Sigmoid colon (tissue), 7 donors: ENCODE measurements at regions of chr14 and their contacts with region 1.

Region 1: DNA sequence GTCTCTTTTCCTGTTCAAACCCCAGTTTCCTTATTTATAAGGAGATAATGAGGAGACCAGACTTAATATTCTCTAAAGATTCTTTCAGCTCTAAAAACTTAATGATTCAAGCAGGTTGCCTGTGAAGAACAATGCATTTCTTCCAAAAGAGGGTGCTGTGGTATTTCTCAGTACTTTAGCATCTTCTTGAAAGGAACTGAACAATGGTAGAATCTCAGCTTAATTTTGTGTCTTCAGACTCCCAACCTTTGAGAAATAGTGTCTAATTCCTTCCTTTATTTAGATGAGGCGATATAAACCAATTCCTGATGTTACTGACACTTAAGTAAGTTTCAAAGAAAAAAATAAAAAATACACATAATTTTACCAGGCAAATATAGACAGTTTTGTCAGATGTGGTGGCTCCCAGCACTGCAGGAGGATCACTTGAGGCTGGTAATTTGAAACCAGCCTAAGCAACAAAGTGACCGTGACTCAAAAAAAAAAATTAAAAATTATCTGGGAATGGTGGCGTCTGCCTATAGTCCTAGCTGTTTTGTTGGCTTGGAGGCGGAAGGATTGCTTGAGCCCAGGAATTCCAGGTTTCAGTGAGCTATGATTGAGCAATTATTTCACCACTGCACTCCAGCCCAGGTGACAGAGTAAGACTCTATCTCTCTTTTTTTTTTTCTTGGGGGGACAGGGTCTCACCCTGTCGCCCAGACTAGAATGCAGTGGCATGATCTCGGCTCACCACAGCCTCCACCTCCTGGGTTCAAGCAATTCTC is 76.9 kb upstream of the PSMA6 start:
- DNase-seq: no peak
- H3K4me3 ChIP-seq: no peak overlapping the region
- H3K27ac ChIP-seq: no peak overlapping the region
- H3K4me1 ChIP-seq: peaks cover 0 to 5% (median 2%) of the 10 kb centered on the region in 4 donors
- H3K27me3 ChIP-seq: no peaks in the 10 kb centered on the region
- CTCF ChIP-seq: peak; percentile 26 to 60 (median 50)
- EP300 ChIP-seq: no peak
- POLR2A ChIP-seq: no peak

Region 2: DNA sequence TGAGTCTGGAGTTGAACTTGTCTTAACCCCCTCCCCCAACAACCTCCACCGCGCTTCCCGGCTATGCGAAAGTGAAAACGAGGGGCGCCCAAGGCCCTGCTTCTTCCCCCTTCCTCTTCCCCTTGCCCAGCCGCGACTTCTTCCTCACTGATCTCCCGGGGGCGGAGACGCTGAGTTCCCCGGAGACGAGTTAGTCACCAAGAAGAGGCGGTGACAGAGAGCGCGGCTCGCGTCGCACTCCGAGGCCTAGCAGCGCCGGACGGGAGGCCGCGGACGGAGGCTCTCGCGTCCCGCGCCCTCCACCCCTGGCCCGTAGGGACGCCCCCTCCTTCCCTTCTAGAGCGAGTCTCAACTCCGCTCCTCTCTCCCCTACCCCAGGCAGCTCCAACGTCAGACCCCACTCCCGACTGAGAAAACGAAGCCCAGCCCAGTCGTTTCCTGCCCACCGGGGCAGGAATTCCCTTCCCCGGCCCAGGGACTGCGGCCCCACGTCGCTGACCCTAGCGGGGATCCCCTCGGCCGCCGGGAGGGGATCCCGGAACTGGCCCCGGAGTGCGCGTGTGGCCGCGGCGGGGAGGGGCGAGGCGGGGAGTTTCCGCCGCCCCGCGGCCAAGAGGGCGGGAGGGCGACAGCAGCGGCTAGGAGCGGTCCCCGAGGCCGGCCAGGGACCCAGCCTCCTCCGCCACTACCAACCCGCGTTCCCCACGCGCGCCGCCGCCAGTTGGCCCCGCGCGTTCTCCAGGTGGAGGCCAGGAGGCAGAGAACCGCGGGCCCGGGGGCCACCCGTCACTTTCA is 341.5 kb before region 1 on chr14:
- intact Hi-C with region 1: no loop called
- DNase-seq: peak; percentile 91
- H3K4me3 ChIP-seq: peak overlapping the region; percentile 66 to 98 (median 92)
- H3K27ac ChIP-seq: peak overlapping the region; percentile 97 to 99 (median 98)
- H3K4me1 ChIP-seq: peaks cover 0 to 13% (median 5%) of the 10 kb centered on the region in 4 donors
- H3K27me3 ChIP-seq: no peaks in the 10 kb centered on the region
- CTCF ChIP-seq: no peak
- EP300 ChIP-seq: no peak
- POLR2A ChIP-seq: peak; percentile 49 to 53

Region 3: GRCh38 chr14:35140718-35141581 is 74.3 kb before region 1 on chr14:
- intact Hi-C with region 1: loop called (anchors 10 kb)
- DNase-seq: no peak
- H3K4me3 ChIP-seq: no peak overlapping the region
- H3K27ac ChIP-seq: no peak overlapping the region
- H3K4me1 ChIP-seq: no peaks in the 10 kb centered on the region
- H3K27me3 ChIP-seq: no peaks in the 10 kb centered on the region
- CTCF ChIP-seq: peak in 3 of 4 experiments; percentile 8 to 38 (median 20)
- EP300 ChIP-seq: no peak
- POLR2A ChIP-seq: no peak

Region 4: GRCh38 chr14:35285168-35286002 is 70.1 kb after region 1 on chr14:
- intact Hi-C with region 1: loop called (anchors 10 kb)
- DNase-seq: no peak
- H3K4me3 ChIP-seq: no peak overlapping the region
- H3K27ac ChIP-seq: peak overlapping the region in 1 of 4 donors; percentile 14
- H3K4me1 ChIP-seq: no peaks in the 10 kb centered on the region
- H3K27me3 ChIP-seq: no peaks in the 10 kb centered on the region
- CTCF ChIP-seq: no peak
- EP300 ChIP-seq: no peak
- POLR2A ChIP-seq: no peak